Tibial artery (tissue), 4 donors: ENCODE measurements at regions of chr2 and their contacts with region 1.

Region 1: DNA sequence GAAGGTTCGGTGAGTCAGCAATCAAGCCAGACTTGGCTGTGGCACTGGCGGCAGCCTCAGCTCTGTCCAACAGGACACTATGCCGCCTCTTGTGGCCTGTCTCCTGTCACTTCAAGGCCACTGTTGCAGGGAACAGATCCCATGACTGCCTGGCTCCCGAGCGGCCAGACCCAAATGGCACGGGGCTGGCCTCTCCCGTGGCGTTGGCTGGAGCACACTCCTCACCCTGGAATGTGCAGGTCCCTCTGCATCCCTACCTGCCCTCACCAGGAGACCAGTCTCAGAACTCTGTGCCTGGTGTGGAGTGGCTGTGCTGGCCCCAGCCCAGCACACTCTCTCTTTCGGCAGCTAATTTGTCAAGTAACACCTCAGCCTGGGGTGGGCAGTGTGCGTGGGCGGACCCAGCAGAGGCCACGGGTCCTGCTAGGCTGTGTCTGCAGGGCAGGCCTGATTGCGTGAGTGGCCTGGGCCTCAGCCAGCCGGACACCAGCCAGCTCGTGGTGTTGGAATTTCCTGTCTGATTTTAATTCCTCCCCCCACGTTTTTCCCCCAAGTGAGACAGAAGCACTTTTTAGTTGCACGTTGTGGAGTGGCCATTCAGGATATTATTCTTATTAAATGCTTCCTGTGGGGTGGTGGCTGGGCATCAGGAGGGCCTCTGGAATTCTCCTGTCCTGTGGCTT is 179.3 kb downstream of the GLI2 start:
- DNase-seq: peak; percentile 81 to 96
- H3K4me3 ChIP-seq: no peak overlapping the region
- H3K27ac ChIP-seq: peak overlapping the region; percentile 78 to 90
- H3K4me1 ChIP-seq: peaks cover 7 to 80% (median 59%) of the 10 kb centered on the region in 4 donors
- H3K27me3 ChIP-seq: no peaks in the 10 kb centered on the region
- CTCF ChIP-seq: peak; percentile 28 to 45

Region 2: DNA sequence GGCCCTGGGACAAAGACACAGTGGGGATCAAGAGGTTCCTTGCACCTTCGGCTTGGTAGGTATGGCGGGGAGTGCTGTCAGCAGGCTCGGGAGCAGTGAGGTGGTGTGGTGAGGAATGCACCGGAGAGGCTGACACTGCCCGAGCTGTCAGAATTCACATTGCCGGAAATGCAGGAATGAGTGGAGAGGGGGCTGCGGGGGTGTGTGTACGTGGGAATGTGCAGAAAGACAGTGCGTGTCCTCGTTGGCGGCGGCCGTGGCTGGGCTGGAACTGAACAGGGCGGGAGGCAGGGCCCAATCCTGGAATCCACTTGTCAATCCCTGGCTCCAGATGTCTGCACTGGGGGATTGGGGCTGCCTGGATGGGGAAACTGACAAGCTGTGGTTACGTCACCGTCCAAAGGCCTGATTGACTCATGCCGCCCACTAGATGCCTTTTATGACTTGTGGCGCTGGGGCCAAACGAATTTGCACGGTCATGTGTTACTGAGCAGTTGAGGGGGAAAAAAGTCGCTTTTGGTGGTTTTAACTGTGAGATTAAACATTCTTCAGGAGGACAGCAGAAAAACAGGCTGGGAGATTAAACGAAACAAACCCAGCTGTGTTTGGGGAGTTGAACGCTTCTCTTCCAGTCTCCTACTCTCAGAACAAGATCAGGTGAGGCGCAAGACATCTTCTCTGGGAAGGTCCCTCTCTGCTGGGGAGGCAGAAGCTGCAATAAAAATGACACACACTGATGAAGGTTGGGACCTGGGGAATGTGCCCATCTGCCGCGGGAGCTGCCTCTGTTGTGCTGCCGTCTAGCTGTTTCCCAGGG is 368.7 kb before region 1 on chr2:
- intact Hi-C with region 1: loop called (anchors 5 kb)
- DNase-seq: peak; percentile 86 to 94
- H3K4me3 ChIP-seq: no peak overlapping the region
- H3K27ac ChIP-seq: peak overlapping the region; percentile 72 to 77
- H3K4me1 ChIP-seq: peaks cover 0 to 35% (median 33%) of the 10 kb centered on the region in 4 donors
- H3K27me3 ChIP-seq: no peaks in the 10 kb centered on the region
- CTCF ChIP-seq: no peak

Region 3: GRCh38 chr2:120735746-120736170 is 179.2 kb before region 1 on chr2 and contains the start of gene GLI2:
- intact Hi-C with region 1: loop called (anchors 10 kb)
- DNase-seq: peak; percentile 71 to 90
- H3K4me3 ChIP-seq: peak within 1 kb of the TSS; percentile 62 to 67
- H3K27ac ChIP-seq: peak within 1 kb of the TSS; percentile 79 to 91
- H3K4me1 ChIP-seq: peaks cover 0 to 40% (median 27%) of the 10 kb centered on the region in 4 donors
- H3K27me3 ChIP-seq: no peaks in the 10 kb centered on the region
- CTCF ChIP-seq: peak; percentile 64 to 79

Region 4: DNA sequence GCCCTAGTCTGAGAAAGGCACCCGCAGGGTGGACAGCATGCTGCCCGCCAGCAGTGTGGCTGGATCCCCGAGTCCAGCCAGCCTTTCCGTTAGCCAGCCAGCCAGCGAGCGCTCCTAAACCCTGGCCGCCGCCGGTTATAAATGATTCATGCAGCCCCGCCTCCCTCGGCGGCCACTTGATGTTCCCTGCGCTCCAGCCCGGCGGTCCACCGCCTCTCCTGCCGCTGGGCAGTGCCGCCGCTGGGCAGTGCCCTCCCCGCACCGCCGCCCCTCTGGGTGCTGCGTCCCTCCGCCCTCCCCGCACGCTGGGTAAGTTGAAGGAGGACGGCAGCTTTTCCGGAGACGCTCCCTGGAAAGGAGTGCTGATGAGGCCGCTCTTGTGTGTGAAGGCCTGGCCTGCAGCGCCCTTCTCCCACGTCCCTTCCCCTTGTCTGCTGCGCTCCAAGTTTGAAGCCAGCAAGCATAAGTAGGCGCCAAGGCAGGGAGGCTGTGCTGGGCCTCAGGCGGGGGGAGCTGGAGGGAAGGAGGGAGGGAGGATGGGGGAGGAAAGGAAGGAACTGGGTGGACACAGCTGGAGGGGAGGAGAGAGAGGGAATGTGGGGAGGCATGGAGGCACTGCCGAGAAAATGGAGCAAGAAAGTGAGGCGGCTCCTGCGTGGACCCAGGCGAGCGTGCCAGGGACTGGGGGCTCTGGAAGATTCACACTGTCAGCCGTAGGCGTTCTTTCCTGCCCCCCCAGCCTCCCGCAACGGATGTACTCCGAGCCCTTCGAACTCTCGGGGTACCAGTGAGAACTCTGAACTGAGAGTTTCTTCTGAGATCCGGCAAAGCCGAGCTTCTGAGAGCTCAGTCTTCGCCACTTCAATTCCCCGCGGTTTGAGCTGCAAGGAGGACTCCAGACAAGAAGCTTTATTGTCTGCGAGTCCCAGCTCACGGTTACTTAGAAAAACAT is 47.4 kb before region 1 on chr2:
- intact Hi-C with region 1: loop called (anchors 5 kb)
- DNase-seq: peak; percentile 90 to 95
- H3K4me3 ChIP-seq: peak overlapping the region; percentile 48 to 51
- H3K27ac ChIP-seq: peak overlapping the region; percentile 82 to 93
- H3K4me1 ChIP-seq: peaks cover 0 to 49% (median 32%) of the 10 kb centered on the region in 4 donors
- H3K27me3 ChIP-seq: no peaks in the 10 kb centered on the region
- CTCF ChIP-seq: peak in 1 of 2 experiments; percentile 8

Region 5: DNA sequence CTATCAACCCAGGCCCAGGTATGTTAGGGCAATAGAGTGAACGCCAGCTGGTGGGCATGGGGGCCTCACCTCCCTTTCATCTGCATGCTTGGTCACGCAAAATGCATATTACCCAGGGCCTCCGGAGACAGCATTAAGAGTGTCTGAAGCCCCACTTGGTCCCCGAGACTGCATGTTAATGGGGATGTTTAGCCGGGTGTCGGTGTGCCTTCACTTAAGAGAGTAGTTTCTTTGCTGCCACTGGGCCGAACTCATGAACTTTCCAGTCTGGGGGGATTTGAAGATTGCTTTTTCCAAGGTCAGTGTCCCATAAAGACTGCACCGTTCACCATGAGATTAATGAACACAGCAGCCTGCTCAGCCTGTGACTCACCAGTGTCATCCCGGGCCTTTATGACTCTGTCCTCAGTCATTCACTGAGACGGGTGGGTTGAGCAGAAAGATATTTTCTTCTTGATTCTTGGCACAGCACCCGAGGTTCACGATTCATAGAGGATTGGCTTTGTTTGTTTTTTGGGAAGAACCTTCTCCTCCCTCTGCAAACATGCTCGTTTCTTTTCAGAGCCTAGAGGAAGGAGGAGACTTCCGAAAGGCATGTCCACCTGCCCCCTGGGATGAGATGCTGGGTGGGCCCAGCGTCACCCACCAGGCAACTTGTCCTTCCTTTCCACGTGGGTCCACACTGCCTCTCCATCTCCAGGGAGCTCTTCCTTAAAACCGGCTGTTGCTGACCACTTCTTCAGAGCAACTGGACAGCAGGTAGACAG is 19.8 kb after region 1 on chr2:
- intact Hi-C with region 1: no loop called
- DNase-seq: peak in 1 of 2 donors; percentile 71
- H3K4me3 ChIP-seq: no peak overlapping the region
- H3K27ac ChIP-seq: peak overlapping the region; percentile 58 to 80
- H3K4me1 ChIP-seq: peaks cover 0 to 77% (median 65%) of the 10 kb centered on the region in 4 donors
- H3K27me3 ChIP-seq: no peaks in the 10 kb centered on the region
- CTCF ChIP-seq: no peak

Region 6: GRCh38 chr2:122055521-122055931 is 1140.5 kb after region 1 on chr2:
- intact Hi-C with region 1: no loop called
- DNase-seq: no peak
- H3K4me3 ChIP-seq: no peak overlapping the region
- H3K27ac ChIP-seq: no peak overlapping the region
- H3K4me1 ChIP-seq: no peaks in the 10 kb centered on the region
- H3K27me3 ChIP-seq: no peaks in the 10 kb centered on the region
- CTCF ChIP-seq: no peak